Stomach (tissue), 19 donors: ENCODE measurements at regions of chr11 and their contacts with region 1.

Region 1: GRCh38 chr11:44621140-44621681 is 55.7 kb downstream of the CD82 start:
- DNase-seq: peak; percentile 70 to 92
- H3K4me3 ChIP-seq: no peak overlapping the region
- H3K27ac ChIP-seq: no peak overlapping the region
- H3K4me1 ChIP-seq: peaks cover 0 to 34% (median 17%) of the 10 kb centered on the region in 4 donors
- H3K27me3 ChIP-seq: no peaks in the 10 kb centered on the region
- CTCF ChIP-seq: peak in 6 of 7 experiments; percentile 34 to 91 (median 88)
- EP300 ChIP-seq: no peak
- POLR2A ChIP-seq: no peak

Region 2: DNA sequence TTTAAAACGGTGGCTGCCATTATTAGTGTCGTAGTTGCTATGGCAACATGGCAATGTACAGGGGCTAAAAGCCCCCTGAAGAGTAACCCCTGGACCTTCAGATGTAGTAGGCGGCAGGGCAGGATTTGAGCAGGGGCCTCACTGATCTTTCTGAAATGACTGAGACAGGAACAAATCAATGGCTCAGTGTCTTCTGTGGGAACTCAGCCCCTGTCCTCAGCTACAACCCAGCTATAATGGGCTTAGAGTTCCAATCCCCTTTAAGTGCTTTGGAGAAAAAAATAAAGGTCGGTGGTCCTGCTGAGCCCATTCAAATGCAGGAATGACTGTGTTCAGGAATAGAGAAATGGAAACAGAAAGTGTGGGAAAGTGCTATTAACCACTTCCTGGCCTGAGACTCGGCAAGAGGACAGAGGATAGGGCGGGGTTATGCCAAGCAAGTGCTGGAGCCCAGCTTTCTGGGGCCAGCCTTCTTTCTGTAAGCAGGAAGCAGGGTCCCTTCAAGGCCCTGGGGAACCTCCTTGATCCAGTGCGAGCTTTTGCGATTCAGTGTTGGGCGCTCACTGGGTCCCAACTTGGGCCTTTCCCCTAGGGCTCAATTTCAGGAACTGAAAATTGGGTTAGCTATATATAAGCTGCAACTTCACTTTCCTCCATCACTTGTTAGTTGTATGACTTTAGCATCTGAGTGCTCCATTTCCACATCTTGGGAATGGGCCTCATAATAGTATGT is 61.8 kb before region 1 on chr11:
- intact Hi-C with region 1: loop called (anchors 2 kb)
- DNase-seq: no peak
- H3K4me3 ChIP-seq: no peak overlapping the region
- H3K27ac ChIP-seq: no peak overlapping the region
- H3K4me1 ChIP-seq: peaks cover 9 to 26% (median 19%) of the 10 kb centered on the region in 4 donors
- H3K27me3 ChIP-seq: no peaks in the 10 kb centered on the region
- CTCF ChIP-seq: no peak
- EP300 ChIP-seq: no peak
- POLR2A ChIP-seq: no peak

Region 3: GRCh38 chr11:44579302-44579761 is 41.9 kb before region 1 on chr11:
- intact Hi-C with region 1: no loop called
- DNase-seq: peak in 1 of 2 donors; percentile 55
- H3K4me3 ChIP-seq: no peak overlapping the region
- H3K27ac ChIP-seq: peak overlapping the region; percentile 23 to 75 (median 38)
- H3K4me1 ChIP-seq: peaks cover 38 to 85% (median 78%) of the 10 kb centered on the region in 4 donors
- H3K27me3 ChIP-seq: no peaks in the 10 kb centered on the region
- CTCF ChIP-seq: no peak
- EP300 ChIP-seq: no peak
- POLR2A ChIP-seq: no peak

Region 4: GRCh38 chr11:44911029-44911814 is 290.0 kb after region 1 on chr11:
- intact Hi-C with region 1: loop called (anchors 5 kb)
- DNase-seq: peak; percentile 89 to 94
- H3K4me3 ChIP-seq: no peak overlapping the region
- H3K27ac ChIP-seq: no peak overlapping the region
- H3K4me1 ChIP-seq: peaks cover 0 to 23% (median 13%) of the 10 kb centered on the region in 4 donors
- H3K27me3 ChIP-seq: peaks cover 0 to 2% (median 0%) of the 10 kb centered on the region in 3 donors
- CTCF ChIP-seq: peak in 5 of 7 experiments; percentile 54 to 89 (median 81)
- EP300 ChIP-seq: no peak
- POLR2A ChIP-seq: no peak